BJ (cell line): ENCODE measurements at regions of chrX and their contacts with region 1.

Region 1: GRCh38 chrX:101078716-101079598 is at the start of gene TMEM35A:
- DNase-seq: no peak
- H3K4me3 ChIP-seq: peak within 1 kb of the TSS; percentile 41
- H3K27me3 ChIP-seq: no peaks in the 10 kb centered on the region
- CTCF ChIP-seq: no peak
- polyA plus RNA-seq, gene TMEM35A: 1.8 and 2.3 TPM in 2 replicates

Region 2: DNA sequence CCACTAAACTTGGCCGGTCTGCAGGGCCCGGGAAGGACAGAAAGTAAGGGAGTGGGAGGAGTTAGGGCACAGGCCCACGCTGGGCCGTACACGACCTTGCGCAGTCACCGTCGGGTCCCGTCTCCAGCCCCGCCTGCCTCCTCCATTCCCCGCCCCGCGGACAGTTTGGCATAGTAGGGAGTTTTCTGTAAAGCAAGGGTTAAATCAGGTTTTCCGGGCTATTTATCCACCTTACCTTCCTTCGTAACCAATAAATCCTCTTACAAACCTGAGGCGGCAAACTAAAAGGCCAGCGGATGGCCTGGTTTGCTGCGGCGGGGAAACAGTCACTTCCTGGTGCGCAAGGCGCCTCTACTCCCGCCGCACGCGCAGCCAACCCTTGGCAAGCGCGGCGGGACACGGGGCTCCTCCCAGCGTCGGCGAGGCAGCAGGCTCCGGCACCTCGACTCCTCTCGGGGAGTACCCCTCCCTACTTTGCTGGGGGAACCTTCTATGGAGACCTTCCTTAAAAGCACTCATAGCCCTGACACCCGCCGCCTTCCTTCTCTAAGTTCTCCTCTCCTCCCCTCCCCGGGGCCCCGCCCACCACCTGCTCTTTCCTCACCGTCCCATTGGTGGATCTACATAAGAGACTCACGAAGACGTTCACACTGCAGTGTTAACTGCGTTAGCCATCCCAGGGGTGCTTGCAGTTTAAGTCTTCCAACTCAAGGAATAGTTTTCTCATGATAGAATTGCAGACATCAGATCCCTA is 27.2 kb before region 1 on chrX and contains the start of gene TRMT2B:
- CTCF ChIA-PET with region 1: interaction called, 3 read pairs
- POLR2A ChIA-PET with region 1: interaction called, 17 read pairs
- DNase-seq: no peak
- H3K4me3 ChIP-seq: peak within 1 kb of the TSS; percentile 56
- H3K27me3 ChIP-seq: no peaks in the 10 kb centered on the region
- CTCF ChIP-seq: no peak
- polyA plus RNA-seq, gene TRMT2B: 11.1 and 12.4 TPM in 2 replicates

Region 3: GRCh38 chrX:101257448-101258258 is 178.7 kb after region 1 on chrX:
- CTCF ChIA-PET with region 1: no interaction called
- POLR2A ChIA-PET with region 1: no interaction called
- DNase-seq: no peak
- H3K4me3 ChIP-seq: no peak overlapping the region
- H3K27me3 ChIP-seq: no peaks in the 10 kb centered on the region
- CTCF ChIP-seq: no peak